Body of pancreas (tissue), 4 donors: ENCODE measurements at regions of chr11 and their contacts with region 1.

Region 1: DNA sequence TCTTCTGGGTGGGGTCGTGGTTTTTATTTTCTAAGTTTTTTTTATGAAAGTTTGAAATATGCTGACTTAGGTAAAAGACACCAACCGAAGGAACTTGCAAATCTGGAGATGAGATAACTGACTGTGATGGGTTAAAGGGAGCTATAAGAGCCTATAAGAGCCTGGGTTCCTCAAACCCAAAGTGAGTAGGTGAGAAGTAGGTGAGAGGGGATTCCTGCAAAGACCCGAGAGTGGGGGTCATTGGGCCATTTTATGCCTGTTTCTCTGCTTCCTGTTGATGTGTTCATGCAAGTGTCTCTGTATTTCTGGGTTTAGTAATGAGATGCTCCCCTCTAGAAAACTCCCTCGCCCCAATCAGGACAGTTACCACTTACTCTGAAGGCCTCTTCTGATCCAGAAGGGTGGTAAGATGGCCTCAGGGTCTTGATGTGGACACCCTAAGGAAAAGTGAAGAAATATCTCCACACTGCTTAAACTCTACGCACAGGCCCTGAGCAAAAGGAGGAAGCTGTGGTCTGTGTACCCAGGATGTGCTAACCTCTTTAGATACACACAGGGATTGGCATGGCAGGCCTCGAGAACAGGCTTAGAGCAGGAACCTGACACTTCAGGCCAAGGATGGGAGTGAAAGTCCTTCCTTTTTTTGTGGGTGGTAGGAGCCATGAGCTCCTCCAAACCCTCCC is 1.8 kb downstream of the FLI1 start:
- DNase-seq: peak in 1 of 4 donors; percentile 80
- ATAC-seq: no peak
- H3K4me3 ChIP-seq: no peak overlapping the region
- H3K27ac ChIP-seq: peak overlapping the region in 2 of 4 donors; percentile 60 to 81
- H3K4me1 ChIP-seq: peaks cover 27% of the 10 kb centered on the region
- H3K27me3 ChIP-seq: peaks cover 0 to 17% of the 10 kb centered on the region in 2 donors
- CTCF ChIP-seq: no peak
- POLR2A ChIP-seq: peak in 1 of 3 donors; percentile 38

Region 2: GRCh38 chr11:128776424-128777284 is 81.0 kb after region 1 on chr11:
- intact Hi-C with region 1: loop called (anchors 10 kb)
- DNase-seq: peak; percentile 52 to 72 (median 54)
- ATAC-seq: peak; percentile 76
- H3K4me3 ChIP-seq: no peak overlapping the region
- H3K27ac ChIP-seq: no peak overlapping the region
- H3K4me1 ChIP-seq: peaks cover 14% of the 10 kb centered on the region
- H3K27me3 ChIP-seq: no peaks in the 10 kb centered on the region
- CTCF ChIP-seq: peak; percentile 38 to 59 (median 47)
- POLR2A ChIP-seq: no peak

Region 3: DNA sequence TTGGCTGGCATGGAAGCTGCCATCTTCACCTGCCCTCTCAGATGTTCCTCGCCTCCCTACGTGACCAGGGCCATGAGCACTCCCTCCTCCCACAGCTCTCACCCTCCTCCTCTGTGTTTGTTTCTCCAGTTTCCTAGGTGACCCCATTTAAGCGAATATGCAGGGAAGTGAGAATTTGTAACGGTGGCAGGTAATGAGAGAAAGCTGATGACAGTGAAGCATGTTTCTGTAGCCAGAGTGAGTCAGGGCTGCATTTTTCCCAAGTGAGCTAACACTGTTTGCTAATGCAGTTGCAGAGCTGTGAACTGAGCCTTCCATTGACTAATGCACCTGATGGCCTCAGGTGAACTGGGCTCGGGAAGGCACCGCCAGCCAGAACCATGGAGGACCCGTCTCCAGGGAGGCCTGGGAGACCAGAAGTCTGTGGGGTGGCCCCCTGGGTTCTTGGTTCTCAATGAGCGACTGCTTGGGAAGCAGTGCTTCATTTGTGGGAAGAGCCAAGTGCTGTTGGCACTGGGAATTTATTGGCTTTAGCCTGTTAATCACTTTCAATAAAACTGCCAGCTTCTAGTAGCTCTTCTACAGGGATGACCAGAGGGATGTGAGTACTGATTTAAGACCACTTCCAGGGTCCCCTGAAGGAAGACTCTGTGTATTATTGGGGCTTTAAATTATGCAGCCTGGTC is 744.5 kb after region 1 on chr11:
- intact Hi-C with region 1: no loop called
- DNase-seq: peak; percentile 63 to 82 (median 74)
- ATAC-seq: peak; percentile 92
- H3K4me3 ChIP-seq: no peak overlapping the region
- H3K27ac ChIP-seq: peak overlapping the region; percentile 42 to 82 (median 75)
- H3K4me1 ChIP-seq: peaks cover 20% of the 10 kb centered on the region
- H3K27me3 ChIP-seq: no peaks in the 10 kb centered on the region
- CTCF ChIP-seq: no peak
- POLR2A ChIP-seq: no peak